ENCODE measurements at regions of chrX and their contacts with region 1.

Region 1: DNA sequence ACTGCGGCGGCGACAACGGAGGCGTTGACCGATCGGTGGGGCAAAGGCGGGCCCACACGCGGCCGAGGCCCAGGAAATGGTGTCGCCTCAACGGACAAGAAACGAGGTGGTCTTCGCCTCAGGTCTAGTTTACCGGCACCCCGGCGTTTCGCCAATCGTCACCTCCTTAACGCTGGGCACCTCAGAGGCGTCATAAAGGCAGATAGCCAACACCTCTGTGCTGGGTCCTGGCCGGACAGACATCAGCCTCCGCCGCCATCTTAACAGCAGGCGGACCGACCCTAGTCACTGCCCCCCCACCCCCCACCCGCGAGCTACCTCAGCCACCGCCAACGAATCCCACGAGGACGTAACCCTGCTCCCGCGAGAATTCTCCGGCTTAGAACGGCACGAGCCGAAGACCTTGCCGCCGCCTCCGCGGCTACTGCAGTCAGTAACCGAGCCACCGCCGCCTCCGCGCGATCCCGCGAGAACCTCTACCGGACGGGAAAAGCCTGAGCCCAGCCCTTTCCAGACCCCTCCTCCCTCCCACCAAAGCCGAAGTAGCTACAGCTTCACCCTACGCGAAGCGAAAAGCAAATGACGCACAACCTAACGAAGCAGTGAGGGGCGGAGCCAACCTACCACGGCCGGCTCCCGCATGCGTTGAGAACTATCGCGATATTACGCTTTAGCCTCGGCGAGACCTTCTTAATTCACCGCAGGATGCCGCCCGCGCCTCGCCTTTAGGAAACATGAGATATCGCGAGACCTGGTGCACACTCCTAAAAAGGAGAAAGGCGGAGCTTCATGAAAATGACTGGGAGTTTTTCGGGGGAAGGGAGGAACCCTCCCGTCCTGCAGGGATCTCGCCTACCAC is 2.7 kb downstream of the HUWE1 start:
- DNase-seq: peak; percentile 94
- ATAC-seq: peak; percentile 76
- H3K4me3 Mint-ChIP-seq: peak overlapping the region; percentile 80
- H3K27ac Mint-ChIP-seq: peak overlapping the region; percentile 93
- H3K4me1 Mint-ChIP-seq: peaks cover 28% of the 10 kb centered on the region
- H3K27me3 Mint-ChIP-seq: no peaks in the 10 kb centered on the region

Region 2: DNA sequence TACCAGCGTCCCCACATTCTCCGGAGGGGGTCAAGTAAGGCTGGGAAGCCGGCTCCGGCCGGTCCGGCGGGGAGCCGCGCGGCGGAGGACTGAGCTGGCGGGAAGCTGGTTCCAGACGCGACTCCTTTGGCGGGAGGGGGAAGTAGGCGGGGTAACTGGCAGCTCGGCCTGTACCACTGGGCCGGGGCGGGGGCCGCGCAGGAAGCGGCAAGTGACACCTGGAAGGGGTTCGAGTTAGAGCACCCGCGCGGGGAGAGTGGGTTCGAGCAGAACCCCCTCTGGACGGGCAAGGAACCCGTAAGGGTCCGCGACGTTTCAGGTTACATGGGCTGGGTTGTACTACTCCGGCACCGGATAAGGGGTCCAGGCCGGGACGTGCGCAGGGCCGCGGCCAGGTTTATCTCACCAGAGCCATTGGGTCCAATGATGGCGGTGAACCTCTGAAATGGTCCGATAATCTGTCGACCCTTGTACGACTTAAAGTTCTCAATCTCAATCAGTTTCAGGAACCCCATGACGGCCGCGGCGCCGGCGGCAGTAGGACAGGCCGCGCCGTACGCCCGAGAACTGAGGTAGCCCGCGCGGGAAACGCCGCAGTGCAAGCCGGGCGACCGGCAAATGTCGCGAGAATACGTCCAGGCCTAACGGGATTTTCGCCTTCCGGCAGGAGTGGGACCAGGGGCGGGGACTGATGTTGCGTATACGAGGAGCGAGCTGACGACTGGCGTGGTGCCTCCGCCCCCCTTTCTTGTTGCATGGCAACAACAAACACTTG is 261.5 kb before region 1 on chrX and contains the start of gene SMC1A:
- CTCF ChIA-PET with region 1: no interaction called
- POLR2A ChIA-PET with region 1: interaction called, 3 read pairs
- intact Hi-C with region 1: loop called in 1 of 2 experiments (anchors 1 kb)
- DNase-seq: peak; percentile 96
- ATAC-seq: peak; percentile 91
- H3K4me3 Mint-ChIP-seq: peak within 1 kb of the TSS; percentile 94
- H3K27ac Mint-ChIP-seq: peak within 1 kb of the TSS; percentile 97
- H3K4me1 Mint-ChIP-seq: peaks cover 27% of the 10 kb centered on the region
- H3K27me3 Mint-ChIP-seq: no peaks in the 10 kb centered on the region
- total RNA-seq, gene SMC1A: 155 to 190 TPM

Region 3: DNA sequence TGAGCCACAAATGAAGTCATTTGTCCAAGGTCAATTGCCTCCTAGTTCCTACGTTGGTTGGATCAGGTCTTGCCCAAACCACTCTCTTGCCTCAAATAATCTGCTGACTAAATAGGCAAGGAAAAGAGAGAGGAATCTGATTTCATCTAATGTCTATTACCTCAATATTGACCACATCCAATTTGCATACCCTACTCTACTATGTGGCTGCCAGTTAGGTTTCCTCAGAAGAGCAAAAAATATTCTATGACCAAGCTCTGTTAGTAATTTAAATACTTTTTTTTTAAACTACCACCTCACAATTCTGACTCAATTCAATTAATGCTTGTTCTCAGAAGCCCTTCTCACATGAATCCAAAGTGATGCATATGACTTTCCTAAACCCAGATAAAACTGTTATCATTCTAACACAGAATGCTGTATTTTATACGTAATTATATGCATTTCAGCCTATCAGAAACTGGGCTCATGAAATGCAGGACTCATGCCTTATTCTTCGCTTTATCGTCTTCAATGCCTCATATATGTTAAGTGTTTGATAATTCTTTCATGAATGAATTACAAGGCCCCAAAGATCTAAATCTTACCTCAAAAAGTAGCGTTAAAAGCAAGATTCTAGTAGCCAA is 95.9 kb before region 1 on chrX:
- CTCF ChIA-PET with region 1: no interaction called
- POLR2A ChIA-PET with region 1: no interaction called
- intact Hi-C with region 1: no loop called
- DNase-seq: no peak
- ATAC-seq: peak; percentile 23
- H3K4me3 Mint-ChIP-seq: no peak overlapping the region
- H3K27ac Mint-ChIP-seq: peak overlapping the region; percentile 42
- H3K4me1 Mint-ChIP-seq: peaks cover 8% of the 10 kb centered on the region
- H3K27me3 Mint-ChIP-seq: no peaks in the 10 kb centered on the region

Region 4: GRCh38 chrX:53732797-53733196 is 49.0 kb after region 1 on chrX:
- CTCF ChIA-PET with region 1: interaction called, 4 read pairs
- POLR2A ChIA-PET with region 1: interaction called, 4 read pairs
- intact Hi-C with region 1: loop called (anchors 1 to 5 kb)
- DNase-seq: peak; percentile 55
- ATAC-seq: peak; percentile 89
- H3K4me3 Mint-ChIP-seq: peak overlapping the region; percentile 70
- H3K27ac Mint-ChIP-seq: peak overlapping the region; percentile 97
- H3K4me1 Mint-ChIP-seq: peaks cover 62% of the 10 kb centered on the region
- H3K27me3 Mint-ChIP-seq: no peaks in the 10 kb centered on the region

Region 5: GRCh38 chrX:54357414-54358377 is 673.9 kb after region 1 on chrX and contains the start of gene WNK3:
- CTCF ChIA-PET with region 1: no interaction called
- POLR2A ChIA-PET with region 1: no interaction called
- intact Hi-C with region 1: loop called in 1 of 2 experiments (anchors 10 kb)
- DNase-seq: peak; percentile 72
- ATAC-seq: peak; percentile 71
- H3K4me3 Mint-ChIP-seq: peak within 1 kb of the TSS; percentile 77
- H3K27ac Mint-ChIP-seq: peak within 1 kb of the TSS; percentile 65
- H3K4me1 Mint-ChIP-seq: peaks cover 17% of the 10 kb centered on the region
- H3K27me3 Mint-ChIP-seq: peaks cover 23% of the 10 kb centered on the region
- total RNA-seq, gene WNK3: 0.74 to 1.1 TPM

Region 6: GRCh38 chrX:54808605-54809483 is 1125.1 kb after region 1 on chrX:
- CTCF ChIA-PET with region 1: no interaction called
- POLR2A ChIA-PET with region 1: no interaction called
- intact Hi-C with region 1: loop called in 1 of 2 experiments (anchors 5 kb)
- DNase-seq: peak; percentile 93
- ATAC-seq: peak; percentile 92
- H3K4me3 Mint-ChIP-seq: peak overlapping the region; percentile 87
- H3K27ac Mint-ChIP-seq: peak overlapping the region; percentile 89
- H3K4me1 Mint-ChIP-seq: peaks cover 16% of the 10 kb centered on the region
- H3K27me3 Mint-ChIP-seq: no peaks in the 10 kb centered on the region

Measured in activated CD4-positive, alpha-beta T cell treated with anti-CD3 and anti-CD28 coated beads for 36 hours (primary cell).